ENCODE measurements at regions of chr15 and their contacts with region 1.

Region 1: GRCh38 chr15:86541540-86541939 is 461.9 kb downstream of the AGBL1 start:
- DNase-seq: no peak
- H3K4me3 ChIP-seq: no peak overlapping the region
- H3K27ac ChIP-seq: no peak overlapping the region
- H3K4me1 ChIP-seq: no peaks in the 10 kb centered on the region
- H3K27me3 ChIP-seq: peaks cover 1% of the 10 kb centered on the region
- CTCF ChIP-seq: no peak

Region 2: DNA sequence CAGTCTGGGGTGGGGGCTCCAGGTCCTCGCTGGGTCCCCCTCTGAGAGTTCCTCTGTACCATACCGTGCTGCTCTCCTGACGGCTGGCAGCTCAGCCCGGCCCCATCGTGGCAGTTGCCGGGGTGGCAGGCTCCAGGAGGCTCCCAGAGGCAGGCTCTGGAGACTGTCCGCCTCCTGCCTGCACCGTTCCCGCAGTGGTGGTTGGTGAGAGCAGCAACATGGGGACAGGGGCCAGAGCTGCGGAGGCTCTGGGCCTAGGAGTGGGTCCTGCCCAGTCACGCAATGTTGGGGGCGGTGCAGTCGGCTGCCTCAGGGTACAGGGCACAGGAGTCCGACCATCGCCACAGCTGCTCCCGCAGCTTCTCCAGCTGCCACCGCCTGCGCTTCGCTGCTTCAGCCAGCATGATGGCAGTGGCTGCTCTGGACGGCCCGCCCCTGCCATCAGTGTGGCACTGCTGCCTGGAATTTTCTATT is 30.9 kb after region 1 on chr15:
- CTCF ChIA-PET with region 1: interaction called, 11 read pairs
- dilution Hi-C with region 1: no loop called
- in situ Hi-C with region 1: no loop called
- intact Hi-C with region 1: no loop called
- DNase-seq: no peak
- H3K4me3 ChIP-seq: no peak overlapping the region
- H3K27ac ChIP-seq: no peak overlapping the region
- H3K4me1 ChIP-seq: no peaks in the 10 kb centered on the region
- H3K27me3 ChIP-seq: no peaks in the 10 kb centered on the region
- CTCF ChIP-seq: no peak

Region 3: GRCh38 chr15:87142096-87142495 is 600.6 kb after region 1 on chr15:
- CTCF ChIA-PET with region 1: no interaction called
- dilution Hi-C with region 1: no loop called
- in situ Hi-C with region 1: no loop called
- intact Hi-C with region 1: no loop called
- DNase-seq: no peak
- H3K4me3 ChIP-seq: no peak overlapping the region
- H3K27ac ChIP-seq: no peak overlapping the region
- H3K4me1 ChIP-seq: peaks cover 3% of the 10 kb centered on the region
- H3K27me3 ChIP-seq: no peaks in the 10 kb centered on the region
- CTCF ChIP-seq: no peak